ENCODE measurements at regions of chr1 and their contacts with region 1.

Region 1: GRCh38 chr1:248906009-248906752 is at the start of gene PGBD2:
- DNase-seq: peak; percentile 98 to 99 (median 98)
- ATAC-seq: peak; percentile 93
- H3K4me3 ChIP-seq: peak within 1 kb of the TSS; percentile 58
- H3K27ac ChIP-seq: peak within 1 kb of the TSS; percentile 99
- H3K4me1 ChIP-seq: peaks cover 22 to 46% of the 10 kb centered on the region in 2 experiments; a peak in 4 of 5 replicates
- H3K27me3 ChIP-seq: no peaks in the 10 kb centered on the region
- CTCF ChIP-seq: peak; percentile 72 to 94 (median 79)
- EP300 ChIP-seq: peak; percentile 31
- POLR2A ChIP-seq: peak; percentile 94
- RAD21 ChIP-seq: peak; percentile 79 to 88
- polyA plus RNA-seq, gene PGBD2: 14.7 to 21.8 TPM

Region 2: GRCh38 chr1:248045209-248045608 is 861.0 kb before region 1 on chr1:
- CTCF ChIA-PET with region 1: no interaction called
- POLR2A ChIA-PET with region 1: no interaction called
- in situ Hi-C with region 1: no loop called
- intact Hi-C with region 1: no loop called
- DNase-seq: no peak
- ATAC-seq: no peak
- H3K4me3 ChIP-seq: no peak overlapping the region
- H3K27ac ChIP-seq: no peak overlapping the region
- H3K4me1 ChIP-seq: no peaks in the 10 kb centered on the region
- H3K27me3 ChIP-seq: no peaks in the 10 kb centered on the region
- CTCF ChIP-seq: no peak
- EP300 ChIP-seq: no peak
- POLR2A ChIP-seq: no peak
- RAD21 ChIP-seq: no peak

Region 3: GRCh38 chr1:248825909-248826760 is 80.0 kb before region 1 on chr1 and contains the start of gene SH3BP5L:
- CTCF ChIA-PET with region 1: interaction called, 3 read pairs
- POLR2A ChIA-PET with region 1: interaction called, 3 read pairs
- in situ Hi-C with region 1: no loop called
- intact Hi-C with region 1: loop called (anchors 1 kb)
- DNase-seq: peak; percentile 88 to 98 (median 92)
- ATAC-seq: peak; percentile 90
- H3K4me3 ChIP-seq: peak within 1 kb of the TSS; percentile 90
- H3K27ac ChIP-seq: peak within 1 kb of the TSS; percentile 99
- H3K4me1 ChIP-seq: peaks cover 29 to 50% of the 10 kb centered on the region in 2 experiments
- H3K27me3 ChIP-seq: no peaks in the 10 kb centered on the region
- CTCF ChIP-seq: peak; percentile 75 to 92 (median 79)
- EP300 ChIP-seq: peak; percentile 9
- POLR2A ChIP-seq: peak; percentile 93
- RAD21 ChIP-seq: peak; percentile 66 to 68
- polyA plus RNA-seq, gene SH3BP5L: 1.9 to 2.7 TPM

Region 4: DNA sequence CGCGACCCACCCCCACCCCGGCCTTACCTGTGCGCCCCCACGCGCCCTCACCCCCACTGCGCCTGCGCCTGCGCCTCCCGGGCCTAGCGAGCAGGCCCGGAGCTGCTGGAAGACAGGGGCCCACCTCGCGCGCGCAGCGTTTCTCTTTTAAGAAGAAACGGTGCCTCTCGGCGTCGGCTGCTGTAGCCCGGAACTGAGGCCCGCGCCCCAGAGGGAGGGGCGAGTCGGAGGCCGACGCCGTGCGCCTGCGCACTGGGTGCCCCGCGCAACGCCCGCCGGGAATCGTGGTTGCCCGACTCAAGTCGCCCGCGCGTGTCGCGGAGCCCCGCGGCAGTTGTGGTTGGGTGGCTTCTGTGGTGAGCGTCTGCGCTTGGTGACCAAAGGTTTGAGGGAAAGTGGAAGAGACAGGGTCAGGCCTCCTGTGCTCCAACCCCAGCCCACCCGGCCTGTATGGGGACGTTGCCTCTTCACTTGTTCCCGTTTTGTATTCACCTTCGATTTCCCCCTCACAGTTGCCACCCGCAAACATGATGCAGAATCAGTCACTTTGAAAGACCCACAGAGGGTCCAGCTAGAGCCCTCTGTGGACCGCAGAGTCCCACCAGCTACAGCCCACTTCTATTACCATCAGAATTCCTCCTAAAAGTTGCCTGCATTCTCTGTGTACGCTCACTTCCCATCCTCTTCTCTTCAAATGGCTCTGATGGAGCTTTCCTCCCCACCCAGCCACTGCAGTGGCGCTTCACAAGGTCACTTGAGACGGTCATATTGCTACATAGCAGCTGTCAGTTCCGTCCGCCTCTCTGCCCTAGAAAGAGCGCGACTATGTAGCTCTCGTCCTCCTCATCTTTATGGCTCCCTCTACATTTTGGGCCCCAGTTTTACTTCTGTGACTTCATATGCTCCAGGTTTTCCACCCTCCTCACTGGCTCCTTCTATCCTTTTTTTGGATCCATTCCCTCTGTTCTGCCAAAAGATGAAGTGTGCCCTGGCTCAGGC is 47.0 kb before region 1 on chr1 and contains the start of gene ZNF692:
- CTCF ChIA-PET with region 1: interaction called, 12 read pairs
- POLR2A ChIA-PET with region 1: interaction called, 10 read pairs
- in situ Hi-C with region 1: no loop called
- intact Hi-C with region 1: loop called (anchors 1 kb)
- DNase-seq: peak; percentile 94 to 99 (median 96)
- ATAC-seq: peak; percentile 86
- H3K4me3 ChIP-seq: peak within 1 kb of the TSS; percentile 66
- H3K27ac ChIP-seq: peak within 1 kb of the TSS; percentile 99
- H3K4me1 ChIP-seq: peaks cover 47 to 50% of the 10 kb centered on the region in 2 experiments
- H3K27me3 ChIP-seq: no peaks in the 10 kb centered on the region
- CTCF ChIP-seq: no peak
- EP300 ChIP-seq: peak; percentile 4; the same call in 1 of the 2 replicates
- POLR2A ChIP-seq: peak; percentile 97
- RAD21 ChIP-seq: no peak
- polyA plus RNA-seq, gene ZNF692: 8.4 to 10.5 TPM

Region 5: GRCh38 chr1:248873409-248873992 is 32.7 kb before region 1 on chr1:
- CTCF ChIA-PET with region 1: no interaction called
- POLR2A ChIA-PET with region 1: interaction called, 3 read pairs
- in situ Hi-C with region 1: no loop called
- intact Hi-C with region 1: loop called (anchors 1 kb)
- DNase-seq: peak; percentile 84 to 97 (median 84)
- ATAC-seq: peak; percentile 82
- H3K4me3 ChIP-seq: peak overlapping the region; percentile 79
- H3K27ac ChIP-seq: peak overlapping the region; percentile 98
- H3K4me1 ChIP-seq: peaks cover 16 to 21% of the 10 kb centered on the region in 2 experiments
- H3K27me3 ChIP-seq: no peaks in the 10 kb centered on the region
- CTCF ChIP-seq: peak in 1 of 3 experiments; percentile 4; a peak in 2 of 6 replicates
- EP300 ChIP-seq: peak; percentile 73
- POLR2A ChIP-seq: peak; percentile 82
- RAD21 ChIP-seq: no peak

Region 6: GRCh38 chr1:248886237-248886895 is 19.8 kb before region 1 on chr1:
- CTCF ChIA-PET with region 1: no interaction called
- POLR2A ChIA-PET with region 1: interaction called, 5 read pairs
- in situ Hi-C with region 1: no loop called
- intact Hi-C with region 1: loop called (anchors 1 kb)
- DNase-seq: peak in 1 of 4 experiments; percentile 51
- ATAC-seq: no peak
- H3K4me3 ChIP-seq: no peak overlapping the region
- H3K27ac ChIP-seq: peak overlapping the region; percentile 51
- H3K4me1 ChIP-seq: peaks cover 23 to 56% of the 10 kb centered on the region in 2 experiments
- H3K27me3 ChIP-seq: no peaks in the 10 kb centered on the region
- CTCF ChIP-seq: no peak
- EP300 ChIP-seq: no peak
- POLR2A ChIP-seq: no peak
- RAD21 ChIP-seq: no peak